ENCODE measurements at regions of chr4 and their contacts with region 1.

Region 1: DNA sequence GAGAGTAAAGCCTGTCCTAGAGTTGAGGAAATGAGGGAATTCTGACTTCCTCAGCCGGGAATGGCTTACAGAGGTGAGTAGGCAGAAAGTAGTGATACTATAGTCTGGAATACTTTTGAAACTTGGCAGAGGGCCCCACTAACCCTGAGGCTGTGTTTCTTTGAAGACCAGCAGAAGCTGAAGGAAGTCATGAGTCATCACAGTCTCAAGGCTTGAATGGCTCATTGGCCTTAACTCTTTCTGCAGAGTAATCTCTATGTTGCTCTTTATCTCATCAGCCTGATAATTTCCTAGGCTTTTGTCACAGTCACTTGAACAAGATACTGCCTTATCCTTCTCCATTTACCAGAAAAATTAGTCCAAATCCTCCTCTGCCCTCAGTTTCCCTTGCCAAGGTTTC is 80.8 kb downstream of the ANKRD50 start:
- DNase-seq: peak; percentile 84 to 96
- H3K4me3 ChIP-seq: no peak overlapping the region
- H3K27ac ChIP-seq: peak overlapping the region; percentile 82
- H3K4me1 ChIP-seq: peaks cover 26% of the 10 kb centered on the region
- H3K27me3 ChIP-seq: no peaks in the 10 kb centered on the region
- CTCF ChIP-seq: no peak

Region 2: GRCh38 chr4:124437853-124438495 is 193.8 kb before region 1 on chr4:
- CTCF ChIA-PET with region 1: no interaction called
- POLR2A ChIA-PET with region 1: no interaction called
- intact Hi-C with region 1: loop called (anchors 5 kb)
- DNase-seq: peak; percentile 9 to 50
- H3K4me3 ChIP-seq: no peak overlapping the region
- H3K27ac ChIP-seq: no peak overlapping the region
- H3K4me1 ChIP-seq: no peaks in the 10 kb centered on the region; the same call in 1 of the 2 replicates
- H3K27me3 ChIP-seq: no peaks in the 10 kb centered on the region
- CTCF ChIP-seq: no peak

Region 3: DNA sequence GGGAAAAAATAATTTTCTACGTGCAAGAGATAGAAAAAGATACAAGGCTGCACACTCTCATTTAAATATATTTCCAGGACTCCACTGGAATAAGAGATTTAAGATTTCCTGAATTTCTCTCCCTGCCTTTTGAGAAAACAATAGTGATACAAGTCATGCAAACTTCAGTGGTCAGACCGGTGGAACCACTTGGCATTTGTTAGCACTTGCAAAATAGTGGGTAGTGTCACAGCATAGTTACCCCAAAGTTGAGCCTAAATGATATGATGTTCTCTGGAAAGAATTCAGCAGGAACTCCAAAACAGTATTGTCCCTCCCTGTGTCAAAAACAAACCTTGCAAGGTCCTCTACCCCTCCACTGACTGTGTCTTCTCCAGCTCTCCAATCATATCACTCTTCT is 21.6 kb before region 1 on chr4:
- CTCF ChIA-PET with region 1: no interaction called
- POLR2A ChIA-PET with region 1: no interaction called
- intact Hi-C with region 1: loop called (anchors 1 kb)
- DNase-seq: peak; percentile 66 to 83
- H3K4me3 ChIP-seq: no peak overlapping the region
- H3K27ac ChIP-seq: peak overlapping the region; percentile 50
- H3K4me1 ChIP-seq: peaks cover 27% of the 10 kb centered on the region
- H3K27me3 ChIP-seq: no peaks in the 10 kb centered on the region
- CTCF ChIP-seq: no peak

Region 4: GRCh38 chr4:124641715-124642381 is 10.1 kb after region 1 on chr4:
- CTCF ChIA-PET with region 1: no interaction called
- POLR2A ChIA-PET with region 1: no interaction called
- intact Hi-C with region 1: no loop called
- DNase-seq: peak; percentile 59 to 90
- H3K4me3 ChIP-seq: no peak overlapping the region
- H3K27ac ChIP-seq: peak overlapping the region; percentile 41
- H3K4me1 ChIP-seq: peaks cover 18% of the 10 kb centered on the region
- H3K27me3 ChIP-seq: no peaks in the 10 kb centered on the region
- CTCF ChIP-seq: no peak